WTC11 (cell line): ENCODE measurements at regions of chr22 and their contacts with region 1.

Region 1: GRCh38 chr22:26385164-26385563 is 43.9 kb upstream of the ASPHD2 start:
- DNase-seq: no peak
- ATAC-seq: no peak
- H3K4me3 Mint-ChIP-seq: no peak overlapping the region
- H3K27ac Mint-ChIP-seq: no peak overlapping the region
- H3K4me1 Mint-ChIP-seq: peaks cover 5% of the 10 kb centered on the region
- H3K27me3 Mint-ChIP-seq: peaks cover 11% of the 10 kb centered on the region
- CTCF ChIP-seq: no peak

Region 2: DNA sequence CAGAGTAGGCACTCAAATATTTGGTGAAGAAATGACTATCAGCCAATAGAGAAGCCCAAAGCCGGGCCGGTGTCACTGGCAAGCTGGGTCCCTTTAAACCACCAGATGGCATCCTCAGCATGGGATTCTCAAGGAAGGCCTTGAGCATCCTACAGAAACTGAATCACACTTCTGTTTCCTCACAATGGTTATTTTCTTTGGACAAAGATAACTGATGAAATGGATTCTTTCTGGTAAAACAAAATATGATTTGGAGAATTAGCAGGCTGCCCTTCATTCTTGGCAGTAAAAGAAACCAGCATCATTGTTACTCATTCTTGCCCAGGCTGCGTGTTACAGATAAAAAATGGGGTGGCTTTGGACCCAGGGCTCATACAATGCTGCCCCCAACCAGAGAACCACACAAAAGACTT is 13.6 kb after region 1 on chr22:
- CTCF ChIA-PET with region 1: interaction called, 10 read pairs
- POLR2A ChIA-PET with region 1: interaction called, 6 read pairs
- DNase-seq: peak; percentile 55
- ATAC-seq: peak; percentile 77
- H3K4me3 Mint-ChIP-seq: no peak overlapping the region
- H3K27ac Mint-ChIP-seq: no peak overlapping the region
- H3K4me1 Mint-ChIP-seq: peaks cover 6% of the 10 kb centered on the region; the same call in 1 of the 2 replicates
- H3K27me3 Mint-ChIP-seq: peaks cover 3% of the 10 kb centered on the region; the same call in 1 of the 2 replicates
- CTCF ChIP-seq: no peak